CD14-positive monocyte (primary cell): ENCODE measurements at regions of chr15 and their contacts with region 1.

Region 1: DNA sequence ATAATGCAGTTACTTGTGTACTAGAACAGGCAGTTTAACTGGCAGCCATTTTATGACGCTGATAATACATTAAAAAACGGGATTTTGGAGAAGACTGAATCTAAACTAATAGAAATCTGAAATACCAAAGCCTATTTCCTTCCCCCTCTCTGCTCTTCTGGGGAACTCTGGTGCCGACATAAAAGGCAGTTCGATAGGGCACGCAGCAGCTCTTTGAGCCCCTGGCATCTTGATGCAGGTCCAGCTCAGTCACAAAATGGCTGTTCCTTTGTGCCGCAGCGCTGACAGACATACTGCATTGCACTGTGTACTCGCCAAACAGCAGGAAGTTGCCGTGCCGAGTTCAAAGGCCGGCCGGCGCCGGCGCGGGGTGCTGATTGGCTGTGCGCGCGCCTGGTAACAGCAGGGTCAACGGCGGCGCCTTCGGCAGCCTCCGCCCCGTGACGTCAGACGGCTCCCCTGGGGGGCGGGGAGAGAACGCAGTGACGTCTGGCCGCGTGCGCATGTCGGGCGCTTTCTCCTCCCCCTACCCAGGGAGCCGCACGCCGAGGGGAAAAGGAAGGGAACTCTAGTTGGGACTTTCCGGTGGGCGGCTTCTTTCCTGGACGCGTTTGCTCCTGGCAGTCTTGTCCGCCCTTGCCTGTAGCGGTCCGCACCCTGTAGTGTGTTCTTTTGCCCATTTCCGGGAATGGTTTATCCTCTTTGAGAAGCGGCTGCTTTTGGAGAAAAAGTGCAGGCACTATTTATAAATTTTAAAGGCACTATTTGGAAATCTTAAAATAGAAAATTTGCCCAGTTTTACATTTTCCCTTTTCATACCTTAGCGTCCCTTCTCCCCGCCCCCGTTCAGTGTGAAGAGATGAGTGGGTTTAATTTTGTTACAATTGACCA is 4.1 kb downstream of the CHD2 start:
- DNase-seq: peak; percentile 99
- H3K4me3 ChIP-seq: peak overlapping the region; percentile 77 to 100 (median 98)
- H3K4me3 Mint-ChIP-seq: peak overlapping the region; percentile 88 to 93
- H3K27ac ChIP-seq: peak overlapping the region; percentile 92 to 98
- H3K27ac Mint-ChIP-seq: peak overlapping the region; percentile 99 to 100 (median 100)
- H3K4me1 ChIP-seq: peaks cover 52 to 72% of the 10 kb centered on the region in 2 donors
- H3K4me1 Mint-ChIP-seq: peaks cover 56% of the 10 kb centered on the region
- H3K27me3 ChIP-seq: no peaks in the 10 kb centered on the region
- H3K27me3 Mint-ChIP-seq: peaks cover 0 to 3% (median 0%) of the 10 kb centered on the region in 3 donors
- CTCF ChIP-seq: no peak

Region 2: GRCh38 chr15:92808978-92809879 is 95.0 kb before region 1 on chr15:
- intact Hi-C with region 1: loop called (anchors 2 to 5 kb)
- DNase-seq: peak; percentile 97 to 98 (median 98)
- H3K4me3 ChIP-seq: peak overlapping the region; percentile 59 to 81 (median 63)
- H3K4me3 Mint-ChIP-seq: peak overlapping the region; percentile 82 to 90
- H3K27ac ChIP-seq: peak overlapping the region; percentile 99
- H3K27ac Mint-ChIP-seq: peak overlapping the region; percentile 98 to 100 (median 99)
- H3K4me1 ChIP-seq: peaks cover 59 to 71% of the 10 kb centered on the region in 2 donors
- H3K4me1 Mint-ChIP-seq: peaks cover 53% of the 10 kb centered on the region
- H3K27me3 ChIP-seq: no peaks in the 10 kb centered on the region
- H3K27me3 Mint-ChIP-seq: peaks cover 0 to 1% (median 0%) of the 10 kb centered on the region in 3 donors
- CTCF ChIP-seq: peak; percentile 98

Region 3: DNA sequence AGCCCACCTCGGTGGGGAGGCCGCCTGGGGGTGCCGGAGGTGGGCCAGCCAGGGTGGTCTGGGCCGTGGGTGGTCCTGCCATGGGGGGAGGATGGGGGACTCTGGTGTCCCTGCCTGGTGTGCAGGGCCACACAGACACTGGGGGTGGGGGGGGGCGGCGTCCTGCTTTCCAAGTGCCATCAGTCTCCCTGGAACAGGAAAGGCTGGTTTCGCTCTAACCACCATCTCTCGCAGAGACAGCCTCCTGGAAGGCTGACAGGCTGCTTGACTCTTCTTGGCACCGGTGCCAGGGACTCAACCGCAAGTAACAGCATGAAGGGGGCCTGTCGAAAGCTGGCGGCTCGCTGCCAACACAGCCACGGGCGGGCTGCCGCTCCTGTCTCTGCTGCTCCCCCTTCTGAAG is 144.6 kb after region 1 on chr15:
- intact Hi-C with region 1: no loop called
- DNase-seq: no peak
- H3K4me3 ChIP-seq: no peak overlapping the region
- H3K4me3 Mint-ChIP-seq: peak overlapping the region in 1 of 2 donors; percentile 80
- H3K27ac ChIP-seq: no peak overlapping the region
- H3K27ac Mint-ChIP-seq: peak overlapping the region in 1 of 7 donors; percentile 10
- H3K4me1 ChIP-seq: peaks cover 20 to 26% of the 10 kb centered on the region in 2 donors
- H3K4me1 Mint-ChIP-seq: peaks cover 32% of the 10 kb centered on the region
- H3K27me3 ChIP-seq: peaks cover 0 to 4% of the 10 kb centered on the region in 2 donors
- H3K27me3 Mint-ChIP-seq: peaks cover 4 to 17% (median 14%) of the 10 kb centered on the region in 3 donors
- CTCF ChIP-seq: no peak